Right lobe of liver (tissue), 6 donors: ENCODE measurements at regions of chr2 and their contacts with region 1.

Region 1: DNA sequence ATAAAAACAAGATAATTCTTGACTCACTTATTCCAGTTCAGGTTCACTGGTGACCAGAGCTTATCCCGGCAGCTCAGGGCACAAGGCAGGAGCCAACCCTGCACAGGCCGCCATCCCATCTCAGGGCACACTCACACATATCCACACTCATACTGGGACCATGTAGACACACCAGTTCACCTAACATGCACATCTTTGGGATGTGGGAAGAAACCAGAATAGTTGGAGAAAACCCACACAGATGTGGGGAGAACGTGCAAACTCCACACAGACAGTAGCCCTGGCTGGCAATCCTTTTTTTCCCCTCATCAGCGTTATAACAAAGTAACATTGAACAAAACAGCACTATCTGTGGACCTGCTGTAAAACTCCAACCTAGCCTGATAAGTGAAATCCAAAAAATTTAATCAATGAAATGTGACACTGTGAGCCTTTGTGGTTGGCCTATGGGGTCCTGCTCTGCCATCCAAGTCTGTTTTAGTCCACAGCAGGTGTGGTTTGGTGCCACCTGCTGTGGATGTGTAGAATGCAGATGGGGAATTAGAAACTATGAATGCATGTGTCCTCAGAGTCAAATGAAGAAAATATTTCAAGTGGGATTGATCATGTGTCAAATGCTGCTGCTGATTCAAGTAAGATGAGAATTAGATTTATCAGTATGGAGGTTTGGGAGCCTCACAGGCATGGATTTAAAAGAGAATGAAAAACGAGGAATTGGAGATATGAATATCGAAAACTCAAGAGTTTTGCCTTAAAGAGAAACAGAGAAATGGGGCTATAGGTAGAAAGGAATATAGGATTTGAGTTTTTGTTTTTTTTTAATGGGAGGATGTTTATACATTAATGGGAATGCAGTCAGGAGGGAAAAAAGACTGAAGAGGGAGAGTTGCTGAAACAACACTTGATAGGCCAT is 47.0 kb downstream of the UGP2 start:
- DNase-seq: no peak
- ATAC-seq: peak; percentile 64 to 85 (median 76)
- H3K4me3 ChIP-seq: no peak overlapping the region
- H3K27ac ChIP-seq: no peak overlapping the region
- H3K4me1 ChIP-seq: no peaks in the 10 kb centered on the region
- H3K27me3 ChIP-seq: no peaks in the 10 kb centered on the region
- CTCF ChIP-seq: peak; percentile 63 to 77 (median 70)
- POLR2A ChIP-seq: no peak

Region 2: GRCh38 chr2:63698825-63699548 is 189.8 kb before region 1 on chr2:
- intact Hi-C with region 1: loop called in 1 of 2 experiments (anchors 10 kb)
- DNase-seq: peak in 1 of 3 donors; percentile 52
- ATAC-seq: peak; percentile 69 to 90 (median 74)
- H3K4me3 ChIP-seq: no peak overlapping the region
- H3K27ac ChIP-seq: peak overlapping the region; percentile 31 to 91 (median 74)
- H3K4me1 ChIP-seq: peaks cover 0 to 54% (median 16%) of the 10 kb centered on the region in 4 donors
- H3K27me3 ChIP-seq: no peaks in the 10 kb centered on the region
- CTCF ChIP-seq: peak; percentile 55 to 71 (median 68)
- POLR2A ChIP-seq: no peak

Region 3: GRCh38 chr2:63801455-63801854 is 87.3 kb before region 1 on chr2:
- intact Hi-C with region 1: no loop called
- DNase-seq: no peak
- ATAC-seq: no peak
- H3K4me3 ChIP-seq: no peak overlapping the region
- H3K27ac ChIP-seq: no peak overlapping the region
- H3K4me1 ChIP-seq: peaks cover 0 to 7% (median 0%) of the 10 kb centered on the region in 4 donors
- H3K27me3 ChIP-seq: no peaks in the 10 kb centered on the region
- CTCF ChIP-seq: no peak
- POLR2A ChIP-seq: no peak